Activated CD4-positive, alpha-beta memory T cell treated with anti-CD3 and anti-CD28 coated beads for 36 hours (primary cell): ENCODE measurements at regions of chr3 and their contacts with region 1.

Region 1: GRCh38 chr3:24680214-24680967 is 185.7 kb upstream of the THRB start:
- DNase-seq: peak; percentile 66
- H3K4me3 Mint-ChIP-seq: no peak overlapping the region
- H3K27ac Mint-ChIP-seq: no peak overlapping the region
- H3K4me1 Mint-ChIP-seq: peaks cover 4% of the 10 kb centered on the region
- H3K27me3 Mint-ChIP-seq: peaks cover 23% of the 10 kb centered on the region

Region 2: DNA sequence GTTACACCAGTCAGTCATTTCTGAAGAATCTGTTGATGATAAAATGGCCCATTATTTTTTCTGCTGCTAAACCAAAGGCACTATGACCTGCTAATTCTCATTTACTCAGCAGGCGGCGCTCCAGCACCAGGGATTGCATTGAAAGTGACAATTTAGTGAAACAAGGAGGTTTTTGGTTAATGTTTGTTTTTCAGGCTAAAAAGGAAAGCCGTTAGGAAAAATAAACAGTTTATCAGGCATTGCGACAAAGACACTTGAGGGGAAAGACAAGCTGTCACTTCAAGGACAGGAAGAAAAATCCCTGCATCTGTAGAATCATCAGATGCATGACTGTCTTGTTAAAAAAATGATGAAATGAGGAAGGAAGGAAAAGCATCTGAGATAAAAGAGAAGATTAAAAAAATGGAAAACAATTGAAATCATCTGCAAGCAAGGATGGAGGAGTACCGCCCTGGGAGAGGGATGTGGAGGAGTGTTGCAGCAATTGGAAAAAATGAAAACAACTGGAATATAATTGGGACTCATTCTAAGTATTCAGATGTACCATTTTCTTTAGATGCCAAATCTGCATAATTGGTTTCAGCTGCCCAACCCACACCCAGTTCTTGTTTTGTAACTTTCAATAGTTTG is 681.3 kb before region 1 on chr3:
- CTCF ChIA-PET with region 1: interaction called, 4 read pairs
- POLR2A ChIA-PET with region 1: no interaction called
- intact Hi-C with region 1: loop called (anchors 1 kb)
- DNase-seq: peak; percentile 80
- H3K4me3 Mint-ChIP-seq: no peak overlapping the region
- H3K27ac Mint-ChIP-seq: no peak overlapping the region
- H3K4me1 Mint-ChIP-seq: peaks cover 3% of the 10 kb centered on the region
- H3K27me3 Mint-ChIP-seq: peaks cover 3% of the 10 kb centered on the region

Region 3: DNA sequence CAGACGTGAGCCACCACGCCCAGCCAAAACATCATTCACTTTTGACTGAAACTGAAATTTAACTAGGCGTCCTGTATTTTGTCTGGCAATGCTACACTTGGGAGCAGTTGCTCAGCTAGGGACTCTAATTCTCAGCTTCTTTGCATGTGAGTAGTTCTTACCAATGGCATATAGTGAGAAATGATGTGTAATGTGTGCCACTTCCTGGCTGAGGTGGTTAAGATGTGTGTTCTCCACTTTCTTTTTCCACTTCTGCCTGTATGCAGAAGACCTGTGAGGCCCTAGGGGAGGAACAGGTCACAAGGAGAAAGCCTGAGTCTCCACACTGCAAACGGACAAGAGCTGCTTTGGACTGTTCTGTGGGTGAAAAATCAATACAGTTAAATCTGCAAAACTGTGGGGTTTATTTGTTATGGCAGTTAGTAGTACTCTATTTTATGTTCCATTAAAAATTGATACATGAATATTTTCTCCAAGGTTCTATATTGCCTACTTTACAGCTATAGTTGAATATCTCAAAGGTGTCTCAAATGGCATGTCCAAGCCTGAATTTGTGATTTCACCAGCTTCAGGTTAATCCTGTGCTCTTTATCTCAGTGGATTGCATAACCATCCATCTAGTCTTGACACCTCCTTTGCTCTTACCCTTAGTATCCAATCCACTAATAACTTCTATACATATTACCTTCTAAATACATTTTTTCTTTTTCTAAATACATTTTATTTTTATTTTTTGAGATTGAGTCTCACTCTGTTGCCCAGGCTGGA is 676.0 kb before region 1 on chr3:
- CTCF ChIA-PET with region 1: interaction called, 3 read pairs
- POLR2A ChIA-PET with region 1: no interaction called
- intact Hi-C with region 1: loop called (anchors 1 kb)
- DNase-seq: peak; percentile 49
- H3K4me3 Mint-ChIP-seq: no peak overlapping the region
- H3K27ac Mint-ChIP-seq: no peak overlapping the region
- H3K4me1 Mint-ChIP-seq: peaks cover 4% of the 10 kb centered on the region
- H3K27me3 Mint-ChIP-seq: no peaks in the 10 kb centered on the region

Region 4: DNA sequence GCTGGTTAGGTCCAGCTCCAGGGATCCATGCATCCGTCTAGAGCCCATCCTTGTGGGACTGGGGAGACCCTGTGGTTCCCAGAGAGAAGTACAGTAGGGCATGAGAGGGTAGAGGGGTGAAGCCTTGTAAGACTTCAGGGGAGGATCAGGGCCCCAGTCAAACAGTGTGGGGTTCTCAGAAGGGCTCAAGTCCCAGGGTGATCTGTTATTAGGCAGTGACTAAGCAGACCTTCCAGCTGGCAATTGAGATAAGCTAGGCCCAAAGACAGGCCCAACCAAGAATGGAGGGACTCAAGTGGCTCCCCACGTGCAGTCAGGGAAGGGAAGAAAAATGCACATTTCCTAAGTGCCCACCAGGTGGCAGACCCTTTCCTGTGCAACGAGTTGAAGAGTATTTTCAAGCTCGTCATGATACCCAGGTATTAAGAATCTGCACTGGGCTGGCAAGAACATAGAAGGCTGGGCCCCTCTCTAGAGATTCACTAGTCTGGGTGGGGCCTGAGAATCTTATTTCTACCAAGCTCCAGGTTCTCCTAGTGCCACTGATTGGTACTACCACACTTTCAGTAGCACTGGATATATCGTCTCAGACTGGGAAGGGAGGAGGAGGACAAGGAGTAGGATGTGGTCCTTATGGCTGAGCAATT is 494.5 kb before region 1 on chr3:
- CTCF ChIA-PET with region 1: no interaction called
- POLR2A ChIA-PET with region 1: no interaction called
- intact Hi-C with region 1: loop called (anchors 5 kb)
- DNase-seq: peak; percentile 30
- H3K4me3 Mint-ChIP-seq: no peak overlapping the region
- H3K27ac Mint-ChIP-seq: no peak overlapping the region
- H3K4me1 Mint-ChIP-seq: no peaks in the 10 kb centered on the region
- H3K27me3 Mint-ChIP-seq: peaks cover 2% of the 10 kb centered on the region

Region 5: DNA sequence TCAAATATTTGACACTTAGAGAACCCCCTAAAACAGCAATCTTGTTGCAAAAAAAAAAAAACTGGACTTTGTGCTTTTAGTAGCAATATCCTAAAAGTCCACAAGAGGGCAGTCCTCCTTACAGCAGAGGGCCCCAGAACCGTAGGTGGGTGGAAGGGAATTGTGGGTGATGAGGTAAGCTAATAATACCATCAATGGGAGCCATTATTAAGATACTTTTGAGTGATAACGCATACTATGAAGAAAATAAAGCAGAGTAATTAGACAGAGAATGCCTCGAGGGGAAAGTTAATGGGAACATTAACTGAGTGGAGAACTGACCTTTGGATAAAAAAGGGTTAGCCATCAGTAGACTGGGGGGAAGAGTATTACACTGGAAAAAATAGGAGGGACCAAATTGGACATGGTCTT is 415.6 kb before region 1 on chr3:
- CTCF ChIA-PET with region 1: interaction called, 3 read pairs
- POLR2A ChIA-PET with region 1: no interaction called
- intact Hi-C with region 1: loop called (anchors 2 kb)
- DNase-seq: no peak
- H3K4me3 Mint-ChIP-seq: no peak overlapping the region
- H3K27ac Mint-ChIP-seq: no peak overlapping the region
- H3K4me1 Mint-ChIP-seq: no peaks in the 10 kb centered on the region
- H3K27me3 Mint-ChIP-seq: peaks cover 5% of the 10 kb centered on the region

Region 6: GRCh38 chr3:24420224-24420623 is 260.2 kb before region 1 on chr3:
- CTCF ChIA-PET with region 1: no interaction called
- POLR2A ChIA-PET with region 1: no interaction called
- intact Hi-C with region 1: no loop called
- DNase-seq: no peak
- H3K4me3 Mint-ChIP-seq: no peak overlapping the region
- H3K27ac Mint-ChIP-seq: no peak overlapping the region
- H3K4me1 Mint-ChIP-seq: no peaks in the 10 kb centered on the region
- H3K27me3 Mint-ChIP-seq: no peaks in the 10 kb centered on the region

Region 7: DNA sequence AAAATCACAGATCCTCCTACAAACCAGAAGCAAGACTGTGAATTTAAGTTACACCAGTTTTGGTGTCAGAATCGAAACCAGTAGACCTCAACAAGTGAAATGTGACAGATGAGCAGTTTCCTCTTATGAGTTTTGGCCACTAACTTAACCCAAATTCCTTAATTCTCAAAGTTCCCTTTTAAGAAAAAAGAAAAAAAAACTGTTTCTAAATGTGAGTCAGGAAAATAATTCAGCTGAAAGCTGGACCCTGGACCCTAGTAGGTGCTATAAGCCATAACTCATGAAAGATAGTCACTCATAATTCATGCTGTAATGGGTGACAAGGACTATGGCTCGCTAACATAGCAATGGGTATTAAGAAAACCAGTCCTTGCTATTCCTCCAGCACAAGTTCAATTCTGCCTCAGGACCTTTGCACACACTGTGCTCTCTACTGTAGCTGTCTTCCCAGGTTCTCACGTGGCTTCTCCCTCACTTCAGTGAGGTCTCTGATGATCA is 176.7 kb before region 1 on chr3:
- CTCF ChIA-PET with region 1: interaction called, 3 read pairs
- POLR2A ChIA-PET with region 1: no interaction called
- intact Hi-C with region 1: loop called (anchors 10 kb)
- DNase-seq: no peak
- H3K4me3 Mint-ChIP-seq: no peak overlapping the region
- H3K27ac Mint-ChIP-seq: no peak overlapping the region
- H3K4me1 Mint-ChIP-seq: no peaks in the 10 kb centered on the region
- H3K27me3 Mint-ChIP-seq: peaks cover 2% of the 10 kb centered on the region

Region 8: GRCh38 chr3:24707936-24708335 is 27.5 kb after region 1 on chr3:
- CTCF ChIA-PET with region 1: no interaction called
- POLR2A ChIA-PET with region 1: no interaction called
- intact Hi-C with region 1: no loop called
- DNase-seq: no peak
- H3K4me3 Mint-ChIP-seq: no peak overlapping the region
- H3K27ac Mint-ChIP-seq: no peak overlapping the region
- H3K4me1 Mint-ChIP-seq: no peaks in the 10 kb centered on the region
- H3K27me3 Mint-ChIP-seq: no peaks in the 10 kb centered on the region

Region 9: DNA sequence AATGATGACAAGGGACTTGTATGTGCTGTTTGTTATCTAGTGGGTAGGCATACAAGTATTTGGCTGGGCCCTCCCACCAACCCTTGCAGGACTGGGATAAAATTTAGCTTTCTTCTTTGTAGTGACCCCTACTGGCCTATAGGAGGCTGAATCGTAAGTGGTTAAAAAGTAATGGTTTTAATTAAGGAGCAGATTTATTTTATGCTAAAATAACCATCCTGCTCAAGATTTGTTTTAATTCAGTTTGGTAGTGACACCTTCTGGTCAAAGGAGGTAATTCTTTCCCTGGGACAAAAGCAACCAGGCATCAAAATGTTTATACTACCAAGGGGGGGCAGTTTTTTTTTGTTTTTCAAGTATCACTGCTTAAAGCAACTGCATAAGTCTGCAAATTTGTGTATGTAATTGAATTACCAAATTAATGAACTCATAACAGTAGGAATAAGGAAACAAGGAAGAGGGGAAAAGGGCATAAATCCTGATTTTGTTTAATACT is 913.7 kb after region 1 on chr3:
- CTCF ChIA-PET with region 1: interaction called, 3 read pairs
- POLR2A ChIA-PET with region 1: no interaction called
- intact Hi-C with region 1: loop called (anchors 5 kb)
- DNase-seq: no peak
- H3K4me3 Mint-ChIP-seq: no peak overlapping the region
- H3K27ac Mint-ChIP-seq: no peak overlapping the region
- H3K4me1 Mint-ChIP-seq: no peaks in the 10 kb centered on the region
- H3K27me3 Mint-ChIP-seq: no peaks in the 10 kb centered on the region